ENCODE measurements at regions of chr3 and their contacts with region 1.

Region 1: DNA sequence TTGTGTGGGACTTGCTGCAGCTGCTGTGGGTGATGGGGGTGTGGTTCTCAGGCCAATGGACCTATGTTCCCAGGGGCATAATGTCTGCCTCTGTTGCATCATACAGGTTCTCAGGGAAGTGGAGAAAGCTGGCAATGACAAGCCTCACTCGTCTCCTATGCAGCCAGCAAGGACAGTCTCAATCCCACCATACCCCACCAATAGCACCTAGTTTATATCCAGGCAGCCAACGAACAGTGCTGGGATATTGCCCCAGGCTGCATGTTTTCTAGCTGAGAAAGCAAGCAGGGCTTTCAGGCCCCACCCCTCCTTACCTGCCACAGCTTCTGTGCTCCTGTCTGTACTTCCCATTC is 14.4 kb upstream of the OR5K2 start:
- DNase-seq: peak; percentile 77
- H3K4me3 ChIP-seq: no peak overlapping the region
- H3K27ac ChIP-seq: peak overlapping the region; percentile 49
- H3K4me1 ChIP-seq: peaks cover 19% of the 10 kb centered on the region
- H3K27me3 ChIP-seq: no peaks in the 10 kb centered on the region
- CTCF ChIP-seq: no peak

Region 2: DNA sequence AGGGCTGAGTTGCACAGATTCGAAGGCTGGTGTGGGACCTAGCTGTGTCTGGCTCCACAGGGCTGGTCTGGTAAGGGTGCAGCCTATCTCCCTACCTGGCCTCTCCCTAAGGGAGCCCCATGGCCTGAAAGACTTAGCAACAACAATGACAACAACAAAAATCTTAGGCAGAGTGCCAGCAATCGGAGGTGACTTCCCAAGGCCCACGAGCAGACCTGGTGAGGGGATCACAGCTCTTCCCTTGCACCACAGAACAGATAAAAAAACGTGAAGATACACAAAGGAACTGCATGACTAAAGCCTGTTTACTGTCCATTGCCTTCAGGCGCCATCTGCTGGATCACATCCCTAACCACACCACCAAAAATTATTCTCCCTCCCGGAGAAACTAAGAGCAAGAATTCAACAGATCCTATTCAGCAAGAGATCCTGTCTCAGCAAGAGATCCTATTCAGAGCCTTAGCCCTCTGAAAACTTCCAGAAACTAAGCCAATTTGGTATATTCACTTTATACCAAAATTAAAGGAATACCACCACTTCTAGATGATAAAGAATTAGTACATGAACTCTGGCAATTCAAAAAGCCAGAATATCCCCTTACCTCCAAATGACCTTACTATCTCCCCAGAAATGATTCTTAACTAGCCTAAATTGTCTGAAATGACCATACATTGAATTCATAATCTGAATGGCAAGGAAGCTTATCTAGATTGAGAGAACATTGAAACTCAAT is 153.5 kb before region 1 on chr3:
- CTCF ChIA-PET with region 1: no interaction called
- dilution Hi-C with region 1: no loop called
- in situ Hi-C with region 1: no loop called
- intact Hi-C with region 1: no loop called
- DNase-seq: peak; percentile 38
- H3K4me3 ChIP-seq: no peak overlapping the region
- H3K27ac ChIP-seq: no peak overlapping the region
- H3K4me1 ChIP-seq: no peaks in the 10 kb centered on the region
- H3K27me3 ChIP-seq: no peaks in the 10 kb centered on the region
- CTCF ChIP-seq: peak; percentile 69 to 83

Region 3: GRCh38 chr3:98513091-98513511 is 30.0 kb after region 1 on chr3:
- CTCF ChIA-PET with region 1: no interaction called
- dilution Hi-C with region 1: no loop called
- in situ Hi-C with region 1: no loop called
- intact Hi-C with region 1: loop called (anchors 1 kb)
- DNase-seq: peak; percentile 92
- H3K4me3 ChIP-seq: no peak overlapping the region
- H3K27ac ChIP-seq: peak overlapping the region; percentile 33
- H3K4me1 ChIP-seq: peaks cover 20% of the 10 kb centered on the region
- H3K27me3 ChIP-seq: no peaks in the 10 kb centered on the region
- CTCF ChIP-seq: no peak

Region 4: GRCh38 chr3:98778852-98779413 is 295.8 kb after region 1 on chr3:
- CTCF ChIA-PET with region 1: no interaction called
- dilution Hi-C with region 1: no loop called
- in situ Hi-C with region 1: no loop called
- intact Hi-C with region 1: no loop called
- DNase-seq: peak; percentile 94
- H3K4me3 ChIP-seq: peak overlapping the region in 2 of 3 experiments; percentile 2 to 6
- H3K27ac ChIP-seq: peak overlapping the region; percentile 85
- H3K4me1 ChIP-seq: peaks cover 54% of the 10 kb centered on the region
- H3K27me3 ChIP-seq: no peaks in the 10 kb centered on the region
- CTCF ChIP-seq: no peak

Measured in mammary epithelial cell (primary cell).